CD8-positive, alpha-beta T cell (primary cell): ENCODE measurements at regions of chr6 and their contacts with region 1.

Region 1: GRCh38 chr6:150004783-150005717 is 20.3 kb downstream of the RAET1L start:
- DNase-seq: peak; percentile 71 to 95 (median 88)
- ATAC-seq: peak; percentile 74
- H3K4me3 ChIP-seq: peak overlapping the region; percentile 81 to 82
- H3K4me3 Mint-ChIP-seq: peak overlapping the region; percentile 90
- H3K27ac ChIP-seq: peak overlapping the region; percentile 36 to 74
- H3K27ac Mint-ChIP-seq: peak overlapping the region; percentile 92
- H3K4me1 ChIP-seq: peaks cover 15% of the 10 kb centered on the region
- H3K4me1 Mint-ChIP-seq: peaks cover 28% of the 10 kb centered on the region
- H3K27me3 ChIP-seq: peaks cover 0 to 7% of the 10 kb centered on the region in 2 experiments
- H3K27me3 Mint-ChIP-seq: peaks cover 15% of the 10 kb centered on the region
- CTCF ChIP-seq: no peak

Region 2: DNA sequence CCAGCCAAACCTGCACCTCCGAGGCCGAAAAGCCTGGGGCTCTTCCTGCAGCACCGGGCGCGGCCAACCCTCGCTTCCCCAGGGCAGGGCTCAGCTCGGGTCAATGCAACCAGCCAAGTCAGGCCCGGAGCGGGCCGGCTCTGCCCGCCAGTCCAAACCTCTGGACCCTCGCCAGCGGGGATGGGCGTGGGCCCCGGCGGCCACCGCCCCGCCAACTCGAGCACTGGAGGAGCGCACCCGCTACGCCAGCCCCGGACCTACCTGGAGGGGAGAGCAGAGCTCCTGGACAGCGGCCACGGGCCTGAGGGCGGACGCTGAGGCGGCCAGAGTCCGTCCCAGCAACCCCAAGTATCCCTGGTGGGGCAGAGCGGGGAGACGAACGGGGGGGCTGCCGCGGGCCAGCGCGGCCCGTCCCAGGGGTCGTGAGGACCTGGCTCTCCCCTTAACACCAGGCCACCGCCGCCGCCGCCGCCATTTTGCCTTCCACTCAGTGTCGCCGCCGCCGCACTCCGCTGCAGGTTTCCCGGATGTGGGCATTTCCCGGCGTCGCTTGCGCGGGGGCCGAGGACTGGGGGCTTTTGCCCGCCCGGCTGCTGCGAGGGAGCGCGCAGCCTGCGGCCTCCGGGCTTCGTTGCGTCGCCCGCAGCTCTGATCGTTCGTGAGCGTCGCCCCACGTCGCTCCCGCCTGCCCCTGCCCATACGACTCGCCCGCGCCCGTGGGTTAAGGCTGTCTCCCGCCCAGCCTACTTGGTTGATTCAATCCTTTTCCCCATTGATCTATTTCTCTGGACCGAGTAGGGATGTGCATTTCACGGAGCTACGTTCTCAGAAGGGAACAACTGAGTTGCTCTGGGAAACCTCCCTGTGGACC is 287.2 kb before region 1 on chr6 and contains the start of gene LATS1:
- CTCF ChIA-PET with region 1: no interaction called
- POLR2A ChIA-PET with region 1: no interaction called
- intact Hi-C with region 1: loop called in 1 of 2 experiments (anchors 10 kb)
- DNase-seq: peak; percentile 79 to 96 (median 91)
- ATAC-seq: peak; percentile 89
- H3K4me3 ChIP-seq: peak within 1 kb of the TSS; percentile 66 to 91
- H3K4me3 Mint-ChIP-seq: peak within 1 kb of the TSS; percentile 86
- H3K27ac ChIP-seq: peak within 1 kb of the TSS; percentile 86 to 94
- H3K27ac Mint-ChIP-seq: peak within 1 kb of the TSS; percentile 96
- H3K4me1 ChIP-seq: peaks cover 27% of the 10 kb centered on the region
- H3K4me1 Mint-ChIP-seq: peaks cover 43% of the 10 kb centered on the region
- H3K27me3 ChIP-seq: peaks cover 0 to 2% of the 10 kb centered on the region in 2 experiments
- H3K27me3 Mint-ChIP-seq: no peaks in the 10 kb centered on the region
- CTCF ChIP-seq: no peak
- total RNA-seq, gene LATS1: 37.2 to 39.1 TPM

Region 3: GRCh38 chr6:149941583-149942431 is 63.2 kb before region 1 on chr6 and contains the start of gene ULBP2:
- CTCF ChIA-PET with region 1: interaction called, 3 read pairs
- POLR2A ChIA-PET with region 1: no interaction called
- intact Hi-C with region 1: loop called in 1 of 2 experiments (anchors 1 kb)
- DNase-seq: peak; percentile 80 to 98 (median 91)
- ATAC-seq: peak; percentile 90
- H3K4me3 ChIP-seq: peak within 1 kb of the TSS; percentile 81 to 86
- H3K4me3 Mint-ChIP-seq: peak within 1 kb of the TSS; percentile 94
- H3K27ac ChIP-seq: peak within 1 kb of the TSS; percentile 26 to 50
- H3K27ac Mint-ChIP-seq: peak within 1 kb of the TSS; percentile 92
- H3K4me1 ChIP-seq: peaks cover 21% of the 10 kb centered on the region
- H3K4me1 Mint-ChIP-seq: peaks cover 31% of the 10 kb centered on the region
- H3K27me3 ChIP-seq: peaks cover 29% of the 10 kb centered on the region in 2 experiments
- H3K27me3 Mint-ChIP-seq: peaks cover 34% of the 10 kb centered on the region
- CTCF ChIP-seq: no peak
- total RNA-seq, gene ULBP2: 7.2 to 9.7 TPM

Region 4: DNA sequence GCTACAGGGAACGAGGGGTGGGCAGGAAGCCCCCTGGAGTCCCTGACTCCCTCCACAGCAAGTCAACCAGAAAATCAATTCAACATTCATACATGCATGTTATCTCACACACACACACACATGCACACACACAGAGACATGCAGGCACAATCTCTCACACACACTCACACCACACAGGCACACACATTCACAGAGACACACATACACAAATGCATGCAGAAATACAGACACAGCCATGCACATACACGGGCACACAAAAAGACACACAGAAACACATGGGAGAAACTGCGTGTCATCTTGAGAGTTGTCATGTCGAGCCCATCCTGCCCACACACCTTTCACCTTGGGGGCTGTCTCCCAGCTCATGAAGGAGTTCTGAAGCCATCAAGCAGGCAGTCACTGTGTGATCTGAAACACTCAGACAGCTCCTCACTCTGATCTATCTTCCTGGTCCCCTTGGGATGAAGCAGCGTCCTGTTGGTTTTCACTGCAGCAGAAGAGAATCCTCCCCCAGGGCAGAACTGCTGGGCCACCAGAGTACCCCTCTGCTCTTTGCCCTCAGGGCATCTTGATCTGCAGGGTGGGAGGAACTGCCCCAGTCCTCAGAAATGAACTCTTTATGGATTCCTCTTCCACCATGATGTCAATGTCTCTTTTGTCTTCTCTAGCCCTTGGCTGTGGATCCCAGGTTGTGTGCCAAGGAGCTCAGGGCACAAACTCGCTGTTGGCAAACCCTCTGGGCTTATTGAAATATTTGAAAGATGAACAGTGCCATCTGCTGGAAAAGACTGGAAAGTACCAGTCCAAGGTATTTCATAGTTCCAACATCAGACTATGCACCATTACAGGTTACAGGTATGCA is 11.5 kb after region 1 on chr6:
- CTCF ChIA-PET with region 1: interaction called, 12 read pairs
- POLR2A ChIA-PET with region 1: no interaction called
- intact Hi-C with region 1: no loop called
- DNase-seq: peak; percentile 18 to 83 (median 55)
- ATAC-seq: peak; percentile 88
- H3K4me3 ChIP-seq: no peak overlapping the region
- H3K4me3 Mint-ChIP-seq: no peak overlapping the region
- H3K27ac ChIP-seq: no peak overlapping the region
- H3K27ac Mint-ChIP-seq: no peak overlapping the region
- H3K4me1 ChIP-seq: peaks cover 5% of the 10 kb centered on the region
- H3K4me1 Mint-ChIP-seq: peaks cover 9% of the 10 kb centered on the region
- H3K27me3 ChIP-seq: peaks cover 13 to 28% of the 10 kb centered on the region in 2 experiments
- H3K27me3 Mint-ChIP-seq: peaks cover 64% of the 10 kb centered on the region
- CTCF ChIP-seq: peak; percentile 70